Heart right ventricle (tissue), 16 donors: ENCODE measurements at regions of chr6 and their contacts with region 1.

Region 1: DNA sequence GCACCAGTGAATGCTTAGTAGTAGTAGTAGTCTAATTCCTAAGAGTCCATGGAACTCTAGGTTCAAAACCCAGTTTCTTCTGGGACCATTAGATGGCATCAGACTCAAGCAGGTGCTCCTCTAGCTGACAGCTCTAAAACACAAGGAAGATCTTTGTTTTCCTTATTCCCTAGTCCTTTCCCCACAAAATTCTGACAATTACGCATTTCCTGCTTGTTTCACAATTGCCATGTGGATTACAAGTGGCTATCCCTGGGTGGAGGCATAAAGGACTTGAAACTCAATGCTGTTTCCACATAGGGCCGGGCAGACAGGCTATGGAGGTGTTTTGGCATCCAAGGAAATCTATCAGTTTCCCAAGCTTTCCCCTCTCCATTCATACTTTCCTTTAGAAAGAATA is 9.2 kb upstream of the HLA-DOB start:
- DNase-seq: no peak
- ATAC-seq: peak in 7 of 8 donors; percentile 34 to 89 (median 69)
- H3K4me3 ChIP-seq: no peak overlapping the region
- H3K27ac ChIP-seq: peak overlapping the region in 6 of 10 donors; percentile 0 to 57 (median 49)
- H3K4me1 ChIP-seq: peaks cover 0 to 22% (median 0%) of the 10 kb centered on the region in 9 donors
- H3K27me3 ChIP-seq: no peaks in the 10 kb centered on the region
- CTCF ChIP-seq: peak in 8 of 9 donors; percentile 24 to 62 (median 57)

Region 2: DNA sequence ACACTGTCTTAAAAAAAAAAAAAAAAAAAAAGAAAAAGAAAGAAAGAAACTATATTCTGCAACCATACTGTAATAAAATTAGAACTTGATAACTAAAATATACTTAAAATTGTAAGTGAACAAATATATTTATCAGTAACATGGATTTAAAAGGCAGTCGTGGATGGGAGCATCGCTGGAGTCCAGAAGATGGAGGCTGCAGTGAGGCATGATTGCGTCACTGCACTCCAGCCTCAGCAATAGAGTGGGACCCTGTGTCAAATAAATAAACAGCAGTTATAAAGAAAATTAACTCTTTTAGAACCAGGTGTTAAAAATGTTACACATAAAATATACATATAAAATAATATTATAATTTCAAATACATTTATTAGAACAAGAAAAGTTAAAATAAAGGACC is 36.8 kb after region 1 on chr6:
- intact Hi-C with region 1: loop called in 8 of 10 experiments (anchors 5 kb)
- DNase-seq: no peak
- ATAC-seq: no peak
- H3K4me3 ChIP-seq: no peak overlapping the region
- H3K27ac ChIP-seq: no peak overlapping the region
- H3K4me1 ChIP-seq: peaks cover 0 to 35% (median 0%) of the 10 kb centered on the region in 9 donors
- H3K27me3 ChIP-seq: no peaks in the 10 kb centered on the region
- CTCF ChIP-seq: no peak

Region 3: GRCh38 chr6:33875141-33875581 is 1049.2 kb after region 1 on chr6:
- intact Hi-C with region 1: no loop called
- DNase-seq: no peak
- ATAC-seq: no peak
- H3K4me3 ChIP-seq: no peak overlapping the region
- H3K27ac ChIP-seq: no peak overlapping the region
- H3K4me1 ChIP-seq: no peaks in the 10 kb centered on the region
- H3K27me3 ChIP-seq: peaks cover 0 to 78% (median 54%) of the 10 kb centered on the region in 7 donors
- CTCF ChIP-seq: no peak